Upper lobe of right lung (tissue), 1 donor: ENCODE measurements at regions of chr22 and their contacts with region 1.

Region 1: GRCh38 chr22:36123673-36124630 is 36.6 kb downstream of the APOL3 start:
- DNase-seq: peak; percentile 98
- ATAC-seq: peak; percentile 98
- H3K4me3 ChIP-seq: peak overlapping the region; percentile 33
- H3K27ac ChIP-seq: peak overlapping the region; percentile 80
- H3K4me1 ChIP-seq: peaks cover 7% of the 10 kb centered on the region
- H3K27me3 ChIP-seq: no peaks in the 10 kb centered on the region
- CTCF ChIP-seq: peak; percentile 97

Region 2: GRCh38 chr22:35930933-35931332 is 193.0 kb before region 1 on chr22:
- intact Hi-C with region 1: loop called (anchors 10 kb)
- DNase-seq: no peak
- ATAC-seq: peak; percentile 92
- H3K4me3 ChIP-seq: no peak overlapping the region
- H3K27ac ChIP-seq: no peak overlapping the region
- H3K4me1 ChIP-seq: no peaks in the 10 kb centered on the region
- H3K27me3 ChIP-seq: no peaks in the 10 kb centered on the region
- CTCF ChIP-seq: peak; percentile 62

Region 3: GRCh38 chr22:36194971-36195370 is 71.0 kb after region 1 on chr22:
- intact Hi-C with region 1: no loop called
- DNase-seq: no peak
- ATAC-seq: peak; percentile 86
- H3K4me3 ChIP-seq: no peak overlapping the region
- H3K27ac ChIP-seq: no peak overlapping the region
- H3K4me1 ChIP-seq: peaks cover 15% of the 10 kb centered on the region
- H3K27me3 ChIP-seq: no peaks in the 10 kb centered on the region
- CTCF ChIP-seq: peak; percentile 78